ENCODE measurements at regions of chr6 and their contacts with region 1.

Region 1: GRCh38 chr6:134640975-134641429 is 308.9 kb downstream of the ALDH8A1 start:
- DNase-seq: peak; percentile 51
- H3K27ac ChIP-seq: no peak overlapping the region
- CTCF ChIP-seq: peak; percentile 73

Region 2: GRCh38 chr6:134628154-134628553 is 12.8 kb before region 1 on chr6:
- CTCF ChIA-PET with region 1: interaction called, 13 read pairs
- POLR2A ChIA-PET with region 1: no interaction called
- DNase-seq: no peak
- H3K27ac ChIP-seq: no peak overlapping the region
- CTCF ChIP-seq: no peak

Measured in RWPE1 (cell line).